Activated T-helper 1 cell treated with anti-CD3 and anti-CD28 coated beads, Interleukin-12 subunit alpha, Interleukin-12 subunit beta, Interleukin-2, Interleukin-4 antibody, amounts not matched to agents 30 ng/mL and 10 ng/mL and 1 ng/mL, durations not matched to agents 14 hours and 24 hours and 36 hours (primary cell): ENCODE measurements at regions of chr9 and their contacts with region 1.

Region 1: DNA sequence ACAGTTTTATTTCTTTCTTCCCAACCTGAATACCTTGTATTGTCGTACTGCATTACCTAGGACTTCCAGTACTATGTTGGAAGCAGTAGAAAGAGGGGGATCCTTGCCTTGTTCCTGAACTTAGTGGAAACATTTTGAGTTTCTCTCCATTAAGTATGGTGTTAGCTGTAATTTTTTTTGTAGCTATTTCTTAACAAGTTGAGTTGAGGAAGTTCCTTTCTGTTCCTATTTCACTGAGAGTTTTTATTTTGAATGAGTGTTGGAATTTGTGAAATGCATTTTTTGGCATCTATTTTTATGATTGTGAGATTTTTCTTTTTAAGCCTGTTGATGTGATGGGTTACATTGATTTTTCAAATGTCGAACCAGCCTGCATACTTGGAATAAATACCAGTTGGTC is 49.0 kb downstream of the FSD1L start:
- DNase-seq: no peak
- H3K4me3 Mint-ChIP-seq: no peak overlapping the region
- H3K27ac Mint-ChIP-seq: no peak overlapping the region
- H3K4me1 Mint-ChIP-seq: no peaks in the 10 kb centered on the region
- H3K27me3 Mint-ChIP-seq: no peaks in the 10 kb centered on the region

Region 2: DNA sequence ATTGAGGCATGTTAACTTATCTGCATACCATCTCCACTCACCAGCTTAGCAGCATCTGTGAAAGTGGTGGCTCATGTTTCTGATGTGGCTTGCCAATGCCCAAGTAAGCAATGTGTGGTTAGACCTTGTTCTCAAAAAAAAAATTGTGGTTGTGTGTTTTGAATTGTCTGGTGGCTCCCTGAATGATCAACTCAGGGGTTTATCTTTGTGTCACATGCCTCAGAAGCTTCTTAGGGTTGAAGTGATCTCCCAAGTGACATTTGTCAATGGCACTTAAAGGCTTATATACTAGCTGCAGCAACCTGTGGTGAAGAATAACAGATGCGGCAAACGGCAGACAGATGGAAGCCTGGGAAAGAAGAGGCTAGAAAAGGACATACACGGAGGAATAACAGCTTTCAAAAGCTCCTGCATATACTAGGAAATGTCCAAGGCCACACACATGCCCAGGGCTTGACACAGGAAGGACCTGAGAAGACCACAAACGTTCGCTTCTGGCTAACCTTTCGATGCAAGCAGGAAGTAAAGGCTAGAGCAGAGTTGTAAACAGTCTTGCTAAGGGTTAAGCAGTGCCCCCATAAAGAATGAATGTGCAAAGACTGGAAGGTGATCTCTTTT is 91.2 kb before region 1 on chr9:
- intact Hi-C with region 1: no loop called
- DNase-seq: peak; percentile 61
- H3K4me3 Mint-ChIP-seq: peak overlapping the region; percentile 23
- H3K27ac Mint-ChIP-seq: peak overlapping the region; percentile 90
- H3K4me1 Mint-ChIP-seq: peaks cover 31% of the 10 kb centered on the region
- H3K27me3 Mint-ChIP-seq: peaks cover 66% of the 10 kb centered on the region

Region 3: DNA sequence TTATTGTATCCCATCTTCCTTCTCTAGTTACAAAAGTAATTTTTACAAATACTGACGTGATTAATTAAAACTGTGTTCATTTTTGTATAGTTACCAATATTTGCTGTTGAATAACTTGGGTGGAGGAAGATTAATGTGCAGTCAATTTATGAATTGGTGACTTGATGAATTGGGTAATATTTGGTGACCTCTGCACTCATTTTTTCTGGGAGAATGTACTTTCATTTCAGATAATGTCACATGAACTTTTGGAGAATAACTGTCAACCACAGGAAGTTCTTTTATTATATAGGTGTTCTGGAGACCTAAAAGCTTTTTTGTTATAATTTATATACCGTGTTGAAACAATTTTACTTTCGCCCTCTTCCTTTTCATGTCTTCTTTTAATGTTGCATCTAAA is 34.7 kb after region 1 on chr9:
- intact Hi-C with region 1: no loop called
- DNase-seq: no peak
- H3K4me3 Mint-ChIP-seq: no peak overlapping the region
- H3K27ac Mint-ChIP-seq: no peak overlapping the region
- H3K4me1 Mint-ChIP-seq: no peaks in the 10 kb centered on the region
- H3K27me3 Mint-ChIP-seq: peaks cover 4% of the 10 kb centered on the region

Region 4: DNA sequence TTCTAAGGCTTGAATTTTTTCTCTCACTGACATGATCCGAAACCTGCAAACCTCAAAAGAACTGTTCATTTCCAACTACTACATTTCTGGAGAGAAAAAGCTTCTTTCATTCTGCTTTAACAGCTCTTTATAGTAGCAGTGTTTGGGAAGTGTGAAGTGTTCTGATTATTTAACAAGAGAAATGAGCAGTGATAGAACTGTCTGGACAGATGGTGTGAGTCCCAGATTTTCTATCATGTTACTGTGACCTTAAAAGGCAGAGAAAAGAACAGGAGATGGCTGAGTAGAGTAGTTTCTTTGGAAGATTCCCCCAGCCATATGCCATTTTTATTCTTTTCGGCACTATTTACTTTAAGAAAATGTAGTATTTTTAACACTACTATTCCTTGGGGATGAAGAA is 124.2 kb after region 1 on chr9:
- intact Hi-C with region 1: no loop called
- DNase-seq: no peak
- H3K4me3 Mint-ChIP-seq: no peak overlapping the region
- H3K27ac Mint-ChIP-seq: no peak overlapping the region
- H3K4me1 Mint-ChIP-seq: no peaks in the 10 kb centered on the region
- H3K27me3 Mint-ChIP-seq: no peaks in the 10 kb centered on the region

Region 5: GRCh38 chr9:107455425-107456135 is 1958.8 kb after region 1 on chr9:
- intact Hi-C with region 1: loop called (anchors 10 kb)
- DNase-seq: no peak
- H3K4me3 Mint-ChIP-seq: no peak overlapping the region
- H3K27ac Mint-ChIP-seq: no peak overlapping the region
- H3K4me1 Mint-ChIP-seq: no peaks in the 10 kb centered on the region
- H3K27me3 Mint-ChIP-seq: no peaks in the 10 kb centered on the region